Calu3 (cell line): ENCODE measurements at regions of chr22 and their contacts with region 1.

Region 1: GRCh38 chr22:30188911-30189310 is 57.6 kb downstream of the LIF start:
- DNase-seq: no peak
- H3K4me3 Mint-ChIP-seq: no peak overlapping the region
- H3K27ac Mint-ChIP-seq: peak overlapping the region; percentile 79
- H3K4me1 Mint-ChIP-seq: peaks cover 45% of the 10 kb centered on the region
- H3K27me3 Mint-ChIP-seq: no peaks in the 10 kb centered on the region
- CTCF ChIP-seq: no peak

Region 2: DNA sequence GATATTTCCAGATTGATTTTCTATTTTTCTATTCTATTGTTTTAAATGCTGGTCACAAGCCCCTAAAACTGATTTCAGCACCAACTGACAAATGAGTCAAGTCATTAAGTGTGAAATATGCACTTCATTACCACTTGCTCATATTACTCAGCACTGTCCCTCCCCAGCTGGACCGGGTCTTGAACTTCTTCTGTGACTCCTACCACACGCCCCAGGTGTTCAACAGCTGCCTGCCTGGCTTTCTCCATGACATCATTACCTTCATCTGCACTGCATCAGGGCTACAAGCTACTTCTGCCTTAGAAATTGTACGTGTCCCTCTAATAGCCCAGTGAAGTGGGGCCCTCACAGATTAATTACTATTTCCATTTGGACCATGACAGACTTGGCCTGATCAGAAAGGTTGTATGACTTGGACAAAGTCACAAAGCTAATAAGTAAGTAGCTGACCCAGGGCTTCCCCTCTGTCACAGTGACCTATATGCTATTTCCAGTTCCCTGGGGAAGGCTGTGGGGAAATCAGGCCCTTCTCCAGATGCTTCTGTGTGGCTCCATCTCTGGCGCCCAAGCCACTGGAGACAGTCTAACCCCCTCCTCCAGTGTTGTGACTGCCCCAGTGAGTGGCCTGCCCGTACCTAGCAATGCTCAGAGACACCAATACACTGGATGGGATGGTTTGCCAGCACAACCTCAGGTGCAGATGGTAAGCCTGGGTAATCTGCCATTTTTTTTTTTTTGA is 119.8 kb after region 1 on chr22:
- CTCF ChIA-PET with region 1: interaction called, 14 read pairs
- intact Hi-C with region 1: no loop called
- DNase-seq: no peak
- H3K4me3 Mint-ChIP-seq: no peak overlapping the region
- H3K27ac Mint-ChIP-seq: no peak overlapping the region
- H3K4me1 Mint-ChIP-seq: peaks cover 92% of the 10 kb centered on the region
- H3K27me3 Mint-ChIP-seq: no peaks in the 10 kb centered on the region
- CTCF ChIP-seq: no peak